GM13976 (cell line): ENCODE measurements at regions of chr3 and their contacts with region 1.

Region 1: GRCh38 chr3:137013955-137014688 is 56.3 kb downstream of the IL20RB start:
- DNase-seq: peak; percentile 84
- CTCF ChIP-seq: peak; percentile 84

Region 2: DNA sequence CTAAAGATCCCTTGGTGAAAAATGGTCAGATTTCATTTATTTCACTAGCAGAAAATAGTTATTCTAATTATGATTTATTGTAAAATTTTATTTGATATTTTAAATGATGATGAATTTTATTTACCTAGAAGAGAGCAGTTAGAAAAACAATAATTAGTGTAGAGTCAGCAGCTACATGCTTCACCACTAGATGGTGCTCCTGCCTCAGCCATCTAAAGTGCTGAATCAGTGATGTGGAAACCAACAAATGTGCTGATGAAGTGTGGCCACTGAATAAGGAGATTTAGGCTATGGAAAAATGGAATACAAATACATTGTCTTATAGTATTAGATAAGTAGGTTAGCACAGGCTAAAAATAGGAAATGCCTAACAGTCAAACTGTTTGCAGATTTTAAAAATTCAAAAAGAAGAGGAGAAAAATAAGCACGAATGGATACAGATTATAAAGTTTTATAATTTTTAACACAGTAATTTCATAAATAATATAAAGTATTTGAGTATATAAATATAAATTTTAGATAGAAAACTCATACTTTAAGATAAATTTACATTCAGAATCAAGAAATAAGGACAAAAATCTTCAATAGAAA is 938.8 kb before region 1 on chr3:
- in situ Hi-C with region 1: loop called (anchors 5 kb)
- DNase-seq: peak; percentile 64
- CTCF ChIP-seq: peak; percentile 85

Region 3: DNA sequence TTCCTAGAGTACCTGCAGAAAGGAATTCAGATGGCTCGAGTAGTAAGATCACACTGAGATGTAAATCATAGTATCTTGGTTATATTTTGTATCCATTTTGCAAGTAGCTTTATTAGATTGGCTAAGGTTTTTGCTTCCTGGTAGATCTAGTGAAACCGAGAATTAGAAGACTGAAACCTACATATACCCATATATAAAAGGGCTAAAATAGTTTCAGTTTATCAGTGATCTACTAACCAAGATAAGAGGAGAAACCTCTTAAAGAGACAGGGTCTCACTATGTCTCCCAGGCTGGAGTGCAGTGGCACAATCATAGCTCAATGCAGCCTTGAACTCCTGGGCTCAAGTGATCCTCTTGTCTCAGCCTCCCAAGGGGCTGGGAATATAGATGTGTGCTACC is 628.7 kb before region 1 on chr3:
- in situ Hi-C with region 1: loop called (anchors 25 kb)
- DNase-seq: peak; percentile 36
- CTCF ChIP-seq: no peak

Region 4: GRCh38 chr3:136752422-136753325 is 261.4 kb before region 1 on chr3:
- in situ Hi-C with region 1: loop called (anchors 10 kb)
- DNase-seq: peak; percentile 92
- CTCF ChIP-seq: peak; percentile 18